ENCODE measurements at regions of chr10 and their contacts with region 1.

Region 1: GRCh38 chr10:60434418-60435046 is 44.9 kb upstream of the ANK3 start:
- DNase-seq: no peak
- H3K4me3 ChIP-seq: no peak overlapping the region
- CTCF ChIP-seq: peak; percentile 49

Region 2: GRCh38 chr10:60099998-60100747 is 334.4 kb before region 1 on chr10:
- CTCF ChIA-PET with region 1: interaction called, 72 read pairs
- POLR2A ChIA-PET with region 1: no interaction called
- DNase-seq: no peak
- H3K4me3 ChIP-seq: no peak overlapping the region
- CTCF ChIP-seq: peak; percentile 44

Region 3: DNA sequence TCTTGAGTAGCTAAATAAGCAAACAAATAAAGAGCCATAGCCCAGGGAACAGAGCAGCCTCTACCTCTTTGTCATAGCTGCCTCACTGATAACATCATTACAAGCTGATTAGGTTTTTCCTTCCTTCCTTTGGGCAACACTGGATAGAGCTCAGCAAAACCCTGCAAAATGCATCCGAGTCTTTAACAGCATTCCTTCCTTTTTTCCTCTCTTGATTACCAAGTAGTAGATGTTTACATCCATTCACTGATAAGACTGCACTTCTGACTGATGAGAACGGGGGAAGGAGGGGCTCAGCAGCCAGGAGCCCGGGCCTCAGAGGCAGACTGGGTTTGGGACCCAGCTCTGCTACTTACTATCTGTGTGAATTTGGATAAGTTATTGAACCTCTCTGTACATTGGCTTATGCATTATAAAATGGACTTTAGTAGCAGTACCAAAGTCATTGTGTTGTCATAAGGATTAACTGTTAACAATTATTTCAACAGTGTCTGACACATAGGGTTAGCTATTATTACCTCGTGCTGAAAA is 259.0 kb before region 1 on chr10:
- CTCF ChIA-PET with region 1: no interaction called
- POLR2A ChIA-PET with region 1: no interaction called
- DNase-seq: no peak
- H3K4me3 ChIP-seq: no peak overlapping the region
- CTCF ChIP-seq: no peak

Region 4: GRCh38 chr10:60237977-60238758 is 196.4 kb before region 1 on chr10:
- CTCF ChIA-PET with region 1: interaction called, 60 read pairs
- POLR2A ChIA-PET with region 1: no interaction called
- DNase-seq: no peak
- H3K4me3 ChIP-seq: no peak overlapping the region
- CTCF ChIP-seq: peak; percentile 41

Region 5: GRCh38 chr10:60335708-60336107 is 98.8 kb before region 1 on chr10:
- CTCF ChIA-PET with region 1: interaction called, 15 read pairs
- POLR2A ChIA-PET with region 1: no interaction called
- DNase-seq: no peak
- H3K4me3 ChIP-seq: no peak overlapping the region
- CTCF ChIP-seq: no peak

Region 6: DNA sequence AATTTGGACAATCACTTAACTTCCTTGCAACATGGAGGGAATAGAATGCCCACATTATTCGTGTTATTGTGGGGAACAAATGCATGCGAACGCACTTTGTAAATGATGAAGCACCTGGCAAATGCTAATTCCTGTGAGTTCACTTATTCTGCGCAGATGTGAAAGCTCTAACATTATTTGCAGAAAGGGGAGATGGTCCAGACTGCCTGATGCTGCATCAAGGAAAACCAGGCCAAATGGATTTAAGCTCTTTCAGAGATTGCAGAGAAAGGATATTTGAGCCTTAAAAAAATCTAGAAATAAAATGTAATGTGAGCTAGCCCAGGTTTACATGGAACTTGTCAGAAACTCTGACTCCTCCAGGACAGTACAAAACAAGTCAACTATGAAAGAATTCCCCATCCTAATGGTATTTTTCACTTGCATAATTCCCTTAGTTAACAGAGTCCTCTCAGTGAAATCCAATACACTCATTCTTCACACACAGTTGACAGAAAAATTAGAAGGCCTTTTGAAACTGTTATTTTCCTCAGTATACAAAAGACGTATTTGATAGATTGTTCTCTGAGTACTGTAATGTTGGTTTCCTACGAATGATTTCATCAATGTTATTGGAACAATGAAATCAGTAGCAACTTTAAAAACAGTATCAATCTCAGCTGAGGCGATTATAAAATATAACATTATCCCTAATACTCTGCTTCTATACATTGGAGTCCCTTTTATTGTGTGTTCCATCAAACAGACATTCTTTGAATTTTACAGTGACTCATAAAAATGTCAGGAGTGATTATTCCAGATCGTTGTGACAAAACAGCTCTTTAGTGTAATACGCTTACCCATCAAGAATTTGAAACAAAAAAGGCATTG is 91.4 kb after region 1 on chr10:
- CTCF ChIA-PET with region 1: no interaction called
- POLR2A ChIA-PET with region 1: no interaction called
- DNase-seq: no peak
- H3K4me3 ChIP-seq: no peak overlapping the region
- CTCF ChIP-seq: no peak